A549 (cell line): ENCODE measurements at regions of chr2 and their contacts with region 1.

Region 1: GRCh38 chr2:113203901-113204519 is 30.2 kb downstream of the PSD4 start:
- DNase-seq: peak; percentile 82 to 86
- ATAC-seq: peak; percentile 71 to 80
- H3K4me3 ChIP-seq: no peak overlapping the region
- H3K27ac ChIP-seq: peak overlapping the region; percentile 92 to 97
- H3K4me1 ChIP-seq: peaks cover 77% of the 10 kb centered on the region
- CTCF ChIP-seq: peak; percentile 96
- EP300 ChIP-seq: no peak
- POLR2A ChIP-seq: no peak
- RAD21 ChIP-seq: peak; percentile 99

Region 2: GRCh38 chr2:113138428-113139322 is 65.3 kb before region 1 on chr2:
- CTCF ChIA-PET with region 1: interaction called, 243 read pairs
- POLR2A ChIA-PET with region 1: interaction called, 13 read pairs
- DNase-seq: peak; percentile 52 to 76
- ATAC-seq: peak; percentile 65 to 88; a peak in 5 of 6 replicates
- H3K4me3 ChIP-seq: no peak overlapping the region
- H3K27ac ChIP-seq: peak overlapping the region; percentile 44 to 66; a peak in 5 of 6 replicates
- H3K4me1 ChIP-seq: 0 out of 3 replicates have a peak, but pooled peaks cover 4% of the 10 kb centered on the region
- CTCF ChIP-seq: peak; percentile 87
- EP300 ChIP-seq: no peak
- POLR2A ChIP-seq: no peak
- RAD21 ChIP-seq: peak; percentile 69 to 74

Region 3: GRCh38 chr2:113225263-113226259 is 21.6 kb after region 1 on chr2:
- CTCF ChIA-PET with region 1: interaction called, 28 read pairs
- POLR2A ChIA-PET with region 1: interaction called, 3 read pairs
- DNase-seq: peak; percentile 41 to 84
- ATAC-seq: peak; percentile 82 to 86
- H3K4me3 ChIP-seq: no peak overlapping the region
- H3K27ac ChIP-seq: peak overlapping the region; percentile 77 to 91
- H3K4me1 ChIP-seq: peaks cover 69% of the 10 kb centered on the region
- CTCF ChIP-seq: no peak
- EP300 ChIP-seq: no peak
- POLR2A ChIP-seq: no peak
- RAD21 ChIP-seq: no peak

Region 4: GRCh38 chr2:113240150-113240862 is 36.3 kb after region 1 on chr2:
- CTCF ChIA-PET with region 1: interaction called, 118 read pairs
- POLR2A ChIA-PET with region 1: interaction called, 13 read pairs
- DNase-seq: peak; percentile 74 to 87
- ATAC-seq: peak; percentile 69
- H3K4me3 ChIP-seq: 0 out of 3 replicates have a peak overlapping the region, but pooled peaks have one; percentile 1
- H3K27ac ChIP-seq: peak overlapping the region; percentile 97 to 98
- H3K4me1 ChIP-seq: peaks cover 50% of the 10 kb centered on the region
- CTCF ChIP-seq: no peak
- EP300 ChIP-seq: peak; percentile 14 to 49; a peak in 3 of 5 replicates
- POLR2A ChIP-seq: no peak; the same call in 1 of the 2 replicates
- RAD21 ChIP-seq: no peak

Region 5: GRCh38 chr2:113257516-113258264 is 53.7 kb after region 1 on chr2:
- CTCF ChIA-PET with region 1: interaction called, 12 read pairs
- POLR2A ChIA-PET with region 1: interaction called, 3 read pairs
- DNase-seq: no peak
- ATAC-seq: 0 out of 6 replicates have a peak, but pooled peaks of 1 of the 2 experiments have one; percentile 29
- H3K4me3 ChIP-seq: no peak overlapping the region
- H3K27ac ChIP-seq: peak overlapping the region in 1 of 2 experiments; percentile 34; a peak in 2 of 6 replicates
- H3K4me1 ChIP-seq: peaks cover 8% of the 10 kb centered on the region; the same call in 2 of the 3 replicates
- CTCF ChIP-seq: no peak
- EP300 ChIP-seq: no peak
- POLR2A ChIP-seq: no peak
- RAD21 ChIP-seq: no peak

Region 6: DNA sequence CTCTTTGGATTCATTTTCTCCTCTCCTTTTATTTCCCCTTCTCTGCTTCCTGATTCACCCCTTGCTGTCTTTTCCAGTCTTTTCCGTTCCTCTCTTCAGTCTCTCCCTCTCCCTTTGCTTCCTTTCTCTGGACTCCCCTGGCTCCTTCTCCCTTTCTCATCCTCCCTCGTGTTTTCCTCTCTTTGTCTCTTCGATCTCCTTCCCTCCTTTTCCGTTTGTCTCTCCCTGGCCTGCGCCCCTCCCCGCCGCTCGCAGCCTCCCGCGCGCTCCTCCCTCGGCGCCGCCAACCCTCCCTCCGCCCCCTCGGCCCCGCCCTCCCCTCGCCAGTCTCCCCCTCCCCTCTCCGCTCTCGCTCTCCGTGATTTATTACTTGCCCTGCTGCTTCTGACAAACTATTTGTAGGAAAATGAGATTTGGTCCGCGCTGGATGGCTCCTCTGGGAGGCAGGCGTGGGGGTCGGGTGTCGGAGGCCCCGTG is 120.7 kb after region 1 on chr2:
- CTCF ChIA-PET with region 1: interaction called, 14 read pairs
- POLR2A ChIA-PET with region 1: no interaction called
- DNase-seq: peak; percentile 80 to 85
- ATAC-seq: peak; percentile 67 to 78
- H3K4me3 ChIP-seq: peak overlapping the region; percentile 60
- H3K27ac ChIP-seq: peak overlapping the region; percentile 89 to 92
- H3K4me1 ChIP-seq: peaks cover 51% of the 10 kb centered on the region
- CTCF ChIP-seq: no peak; the same call in 2 of the 3 replicates
- EP300 ChIP-seq: no peak
- POLR2A ChIP-seq: peak; percentile 33
- RAD21 ChIP-seq: no peak

Region 7: GRCh38 chr2:113390124-113390849 is 186.3 kb after region 1 on chr2:
- CTCF ChIA-PET with region 1: interaction called, 67 read pairs
- POLR2A ChIA-PET with region 1: no interaction called
- DNase-seq: peak; percentile 14 to 85
- ATAC-seq: peak; percentile 77 to 89
- H3K4me3 ChIP-seq: no peak overlapping the region
- H3K27ac ChIP-seq: peak overlapping the region; percentile 12 to 59; a peak in 4 of 6 replicates
- H3K4me1 ChIP-seq: peaks cover 6% of the 10 kb centered on the region; the same call in 2 of the 3 replicates
- CTCF ChIP-seq: peak; percentile 95
- EP300 ChIP-seq: no peak
- POLR2A ChIP-seq: no peak
- RAD21 ChIP-seq: peak; percentile 74 to 82